Mucosa of descending colon (tissue), 3 donors: ENCODE measurements at regions of chr15 and their contacts with region 1.

Region 1: GRCh38 chr15:75453703-75454470 is 2.4 kb upstream of the SIN3A start:
- DNase-seq: peak; percentile 97 to 99 (median 99)
- ATAC-seq: peak; percentile 61
- H3K4me3 ChIP-seq: peak overlapping the region; percentile 75
- H3K4me1 ChIP-seq: peaks cover 10% of the 10 kb centered on the region
- CTCF ChIP-seq: no peak

Region 2: DNA sequence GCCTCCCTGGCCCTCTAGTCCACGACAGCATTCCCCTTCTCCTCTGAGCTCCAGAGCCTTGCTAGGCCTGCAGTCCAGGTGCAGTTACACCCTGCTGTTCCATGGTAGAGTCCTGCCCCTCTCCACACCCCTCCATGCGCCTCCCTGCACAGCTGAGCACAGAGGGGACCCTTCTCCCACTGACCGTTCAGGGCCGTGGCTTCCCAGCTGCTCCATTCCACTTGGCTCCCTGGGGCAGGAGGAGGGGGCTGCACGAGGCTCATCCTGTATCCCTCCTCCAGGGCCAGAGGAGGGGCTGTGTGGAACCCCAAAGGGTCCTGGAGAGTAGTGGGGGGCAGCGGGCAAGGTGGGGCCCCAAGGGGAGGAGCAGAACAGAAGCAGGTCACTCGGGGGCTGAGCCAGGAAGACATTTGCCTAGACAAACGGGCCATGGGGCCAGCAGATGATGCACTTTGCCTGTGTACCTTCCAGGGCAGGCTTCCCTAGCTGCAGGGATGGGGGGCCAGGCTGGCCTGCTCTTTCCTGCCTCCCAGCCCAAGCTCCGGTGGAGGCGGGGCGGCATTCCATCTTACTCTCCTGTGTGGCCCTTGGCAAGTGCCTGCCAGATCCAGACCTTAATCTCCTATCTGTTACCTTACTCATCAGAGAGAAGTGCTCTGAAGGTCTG is 216.4 kb before region 1 on chr15:
- intact Hi-C with region 1: no loop called
- DNase-seq: no peak
- ATAC-seq: no peak
- H3K4me3 ChIP-seq: no peak overlapping the region
- H3K4me1 ChIP-seq: no peaks in the 10 kb centered on the region
- CTCF ChIP-seq: no peak

Region 3: GRCh38 chr15:75639709-75640482 is 186.0 kb after region 1 on chr15 and contains the start of gene IMP3:
- intact Hi-C with region 1: loop called in 1 of 2 experiments (anchors 10 kb)
- DNase-seq: peak; percentile 95 to 96 (median 96)
- ATAC-seq: peak; percentile 93
- H3K4me3 ChIP-seq: peak within 1 kb of the TSS; percentile 70
- H3K4me1 ChIP-seq: peaks cover 23% of the 10 kb centered on the region
- CTCF ChIP-seq: no peak
- total RNA-seq, gene IMP3: 47.6 to 54.8 (median 50.4) TPM